WTC11 (cell line): ENCODE measurements at regions of chr12 and their contacts with region 1.

Region 1: GRCh38 chr12:47742253-47742825 is 16.3 kb downstream of the RAPGEF3 start:
- DNase-seq: peak; percentile 88
- ATAC-seq: peak; percentile 31
- H3K4me3 Mint-ChIP-seq: no peak overlapping the region
- H3K27ac Mint-ChIP-seq: no peak overlapping the region
- H3K4me1 Mint-ChIP-seq: peaks cover 32% of the 10 kb centered on the region
- H3K27me3 Mint-ChIP-seq: peaks cover 10% of the 10 kb centered on the region
- CTCF ChIP-seq: peak; percentile 99

Region 2: GRCh38 chr12:47700263-47700662 is 42.1 kb before region 1 on chr12:
- CTCF ChIA-PET with region 1: no interaction called
- POLR2A ChIA-PET with region 1: no interaction called
- DNase-seq: no peak
- ATAC-seq: no peak
- H3K4me3 Mint-ChIP-seq: no peak overlapping the region
- H3K27ac Mint-ChIP-seq: no peak overlapping the region
- H3K4me1 Mint-ChIP-seq: peaks cover 15% of the 10 kb centered on the region
- H3K27me3 Mint-ChIP-seq: no peaks in the 10 kb centered on the region
- CTCF ChIP-seq: no peak

Region 3: GRCh38 chr12:47758834-47759690 is 16.7 kb after region 1 on chr12 and contains the start of gene RAPGEF3:
- CTCF ChIA-PET with region 1: interaction called, 173 read pairs
- POLR2A ChIA-PET with region 1: interaction called, 4 read pairs
- DNase-seq: peak; percentile 74
- ATAC-seq: peak; percentile 79
- H3K4me3 Mint-ChIP-seq: peak within 1 kb of the TSS; percentile 67
- H3K27ac Mint-ChIP-seq: no peak within 1 kb of the TSS
- H3K4me1 Mint-ChIP-seq: peaks cover 53% of the 10 kb centered on the region
- H3K27me3 Mint-ChIP-seq: no peaks in the 10 kb centered on the region; the same call in 1 of the 2 replicates
- CTCF ChIP-seq: no peak; the same call in 1 of the 2 replicates
- total RNA-seq, gene RAPGEF3: 9.0 to 13.3 TPM (median 9.7 TPM) in 3 replicates

Region 4: GRCh38 chr12:47779301-47779942 is 37.1 kb after region 1 on chr12:
- CTCF ChIA-PET with region 1: interaction called, 735 read pairs
- POLR2A ChIA-PET with region 1: interaction called, 17 read pairs
- DNase-seq: peak; percentile 97
- ATAC-seq: peak; percentile 85
- H3K4me3 Mint-ChIP-seq: peak overlapping the region; percentile 44
- H3K27ac Mint-ChIP-seq: peak overlapping the region; percentile 37; the same call in 1 of the 2 replicates
- H3K4me1 Mint-ChIP-seq: peaks cover 32% of the 10 kb centered on the region
- H3K27me3 Mint-ChIP-seq: peaks cover 11% of the 10 kb centered on the region
- CTCF ChIP-seq: peak; percentile 93

Region 5: GRCh38 chr12:47819896-47820630 is 77.7 kb after region 1 on chr12 and contains the start of gene HDAC7:
- CTCF ChIA-PET with region 1: interaction called, 20 read pairs
- POLR2A ChIA-PET with region 1: no interaction called
- DNase-seq: peak; percentile 74
- ATAC-seq: peak; percentile 51
- H3K4me3 Mint-ChIP-seq: peak within 1 kb of the TSS; percentile 86
- H3K27ac Mint-ChIP-seq: peak within 1 kb of the TSS; percentile 98
- H3K4me1 Mint-ChIP-seq: peaks cover 59% of the 10 kb centered on the region
- H3K27me3 Mint-ChIP-seq: peaks cover 12% of the 10 kb centered on the region
- CTCF ChIP-seq: no peak
- total RNA-seq, gene HDAC7: 89.9 to 111 TPM (median 94.7 TPM) in 3 replicates

Region 6: GRCh38 chr12:47843226-47843990 is 101.1 kb after region 1 on chr12:
- CTCF ChIA-PET with region 1: interaction called, 153 read pairs
- POLR2A ChIA-PET with region 1: no interaction called
- DNase-seq: no peak
- ATAC-seq: peak; percentile 42
- H3K4me3 Mint-ChIP-seq: no peak overlapping the region
- H3K27ac Mint-ChIP-seq: no peak overlapping the region
- H3K4me1 Mint-ChIP-seq: peaks cover 15% of the 10 kb centered on the region
- H3K27me3 Mint-ChIP-seq: peaks cover 2% of the 10 kb centered on the region; the same call in 1 of the 2 replicates
- CTCF ChIP-seq: no peak

Region 7: DNA sequence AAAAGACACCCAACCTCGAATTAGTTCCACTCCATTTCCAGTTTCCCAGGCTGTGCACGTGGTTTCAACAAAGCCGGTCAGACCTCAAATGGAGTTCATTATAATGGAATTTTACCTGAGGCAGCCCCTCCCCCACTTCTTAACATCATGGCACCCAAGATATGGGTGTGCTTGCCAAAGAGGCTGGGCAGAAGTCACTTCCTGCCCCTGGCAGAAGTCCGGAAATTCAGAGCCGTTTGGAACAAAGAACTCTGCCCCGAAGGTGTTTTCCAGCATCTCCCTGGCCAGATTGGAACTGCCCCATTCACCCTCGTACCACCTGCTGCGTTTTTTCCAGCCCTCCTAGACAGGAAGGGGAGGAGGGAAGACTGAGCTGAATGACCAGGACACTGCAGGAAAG is 154.3 kb after region 1 on chr12:
- CTCF ChIA-PET with region 1: no interaction called
- POLR2A ChIA-PET with region 1: no interaction called
- DNase-seq: peak; percentile 24
- ATAC-seq: peak; percentile 31
- H3K4me3 Mint-ChIP-seq: no peak overlapping the region
- H3K27ac Mint-ChIP-seq: no peak overlapping the region
- H3K4me1 Mint-ChIP-seq: peaks cover 14% of the 10 kb centered on the region
- H3K27me3 Mint-ChIP-seq: peaks cover 67% of the 10 kb centered on the region
- CTCF ChIP-seq: no peak